BJ (cell line): ENCODE measurements at regions of chr6 and their contacts with region 1.

Region 1: DNA sequence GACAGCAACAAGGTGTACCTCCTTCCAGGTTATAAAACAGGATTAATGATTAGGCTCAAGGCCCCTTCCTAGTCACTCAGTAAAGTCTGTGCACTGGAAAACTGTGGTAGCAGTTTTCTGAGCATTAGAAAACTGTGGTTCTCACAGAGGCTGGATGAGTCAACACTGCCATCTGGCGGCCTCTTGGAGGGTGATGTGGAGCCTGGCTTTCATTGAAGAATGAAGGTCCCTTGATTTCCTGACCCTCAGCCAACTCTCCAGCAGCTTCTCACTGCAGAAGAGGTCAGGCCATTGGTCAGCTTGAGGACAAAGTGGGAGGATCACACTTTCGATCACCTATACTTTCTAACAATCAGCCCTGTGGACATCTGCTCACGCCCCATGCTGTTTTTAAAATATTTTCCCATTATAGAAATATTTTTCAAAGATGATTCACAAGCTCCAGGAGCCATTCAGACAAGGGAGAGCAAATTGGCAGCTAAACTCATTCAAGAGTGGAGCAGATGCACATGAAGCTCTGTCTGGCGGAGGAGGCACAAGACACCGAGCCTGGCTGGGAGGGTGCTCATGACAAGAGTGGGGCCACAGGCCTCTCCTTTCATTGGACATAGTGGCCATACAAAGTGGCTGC is 23.2 kb downstream of the PSMB1 start:
- DNase-seq: peak; percentile 5
- H3K4me3 ChIP-seq: no peak overlapping the region
- H3K27me3 ChIP-seq: no peaks in the 10 kb centered on the region
- CTCF ChIP-seq: peak; percentile 97

Region 2: DNA sequence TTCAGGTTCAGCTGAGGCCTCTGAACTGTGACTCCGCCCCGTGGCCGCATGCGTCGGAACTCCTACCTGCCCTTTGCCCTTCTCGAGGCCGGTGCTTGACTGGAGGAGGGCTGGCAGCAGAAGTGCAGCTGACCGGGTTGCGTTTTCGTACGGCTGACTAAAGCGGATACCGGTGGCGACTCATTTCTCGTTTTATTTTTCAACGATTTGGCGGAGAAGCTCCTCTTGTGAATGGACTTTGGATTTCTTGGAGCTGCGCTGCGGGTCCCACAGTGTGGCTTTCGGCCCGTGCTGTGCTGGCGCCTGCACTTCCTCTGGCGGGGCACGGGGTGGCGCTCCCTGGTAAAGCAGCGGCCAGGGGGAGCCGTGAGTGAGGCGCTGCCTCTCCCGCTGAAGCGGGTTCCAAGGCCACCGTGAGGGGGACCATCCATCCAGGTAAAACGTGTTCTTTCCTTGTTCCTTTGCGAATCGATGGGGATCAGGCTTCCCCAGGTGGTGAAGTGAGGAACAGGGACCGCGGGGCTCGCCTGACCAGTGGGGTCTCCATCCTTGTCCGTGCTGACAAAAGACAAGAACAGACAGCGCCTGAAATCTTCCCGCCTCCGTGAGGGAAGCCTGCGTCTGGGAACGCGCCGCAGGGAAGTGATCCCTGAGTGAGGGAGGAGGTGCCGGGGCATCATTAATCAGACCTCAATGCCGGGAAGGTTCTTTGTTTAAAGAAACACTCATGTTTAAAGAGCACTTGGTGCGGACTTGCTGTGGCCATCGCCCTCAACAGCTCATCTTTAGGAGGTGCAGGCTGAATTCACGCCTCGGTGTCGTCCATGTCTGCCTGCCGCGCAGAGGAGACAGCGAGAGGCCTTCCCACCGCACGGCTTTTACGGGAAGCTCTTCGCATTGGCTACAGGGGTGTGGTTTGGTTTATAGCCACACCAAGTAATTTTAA is 739.7 kb before region 1 on chr6:
- CTCF ChIA-PET with region 1: interaction called, 52 read pairs
- POLR2A ChIA-PET with region 1: no interaction called
- DNase-seq: peak; percentile 21
- H3K4me3 ChIP-seq: peak overlapping the region; percentile 45
- H3K27me3 ChIP-seq: peaks cover 1% of the 10 kb centered on the region; the same call in 1 of the 2 replicates
- CTCF ChIP-seq: peak; percentile 99

Region 3: DNA sequence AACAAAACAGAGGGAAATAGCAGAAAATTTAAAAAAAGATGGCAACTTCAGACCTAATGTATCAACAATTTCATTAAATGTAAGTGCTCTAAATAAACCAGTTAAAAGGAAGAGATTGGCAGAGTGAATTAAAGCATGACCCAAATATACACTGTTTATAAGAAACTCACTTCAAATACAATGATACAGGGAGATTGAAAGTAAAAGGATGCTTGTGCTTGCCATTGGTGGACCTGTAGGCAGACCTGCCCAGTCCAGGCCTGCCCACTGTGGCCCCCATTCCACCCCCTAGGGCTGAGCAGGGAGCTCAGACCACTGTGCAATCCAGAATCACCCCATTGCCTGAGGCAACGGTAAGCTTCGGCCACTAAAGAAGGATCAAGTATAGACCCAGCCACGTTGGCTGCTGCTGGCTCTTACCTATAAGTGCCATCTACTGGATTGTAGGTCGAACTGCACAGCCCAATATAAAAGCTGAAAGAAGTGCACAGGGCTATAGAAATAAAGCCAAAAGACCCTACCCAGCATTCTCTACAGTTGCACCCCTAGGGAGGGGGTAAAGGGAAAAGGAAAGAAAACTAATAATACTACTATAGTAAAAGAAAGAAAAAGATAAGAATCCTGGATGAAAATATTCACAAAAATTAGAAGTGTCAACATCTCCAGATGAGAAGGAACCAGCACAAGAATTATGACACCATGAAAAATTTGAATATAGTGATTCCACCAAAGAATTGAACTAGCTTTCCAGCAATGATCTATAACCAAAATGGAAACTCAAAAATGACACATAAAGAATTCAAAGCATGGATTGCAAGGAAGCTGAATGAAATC is 13.0 kb before region 1 on chr6:
- CTCF ChIA-PET with region 1: interaction called, 15 read pairs
- POLR2A ChIA-PET with region 1: no interaction called
- DNase-seq: no peak
- H3K4me3 ChIP-seq: no peak overlapping the region
- H3K27me3 ChIP-seq: no peaks in the 10 kb centered on the region
- CTCF ChIP-seq: peak; percentile 86

Region 4: DNA sequence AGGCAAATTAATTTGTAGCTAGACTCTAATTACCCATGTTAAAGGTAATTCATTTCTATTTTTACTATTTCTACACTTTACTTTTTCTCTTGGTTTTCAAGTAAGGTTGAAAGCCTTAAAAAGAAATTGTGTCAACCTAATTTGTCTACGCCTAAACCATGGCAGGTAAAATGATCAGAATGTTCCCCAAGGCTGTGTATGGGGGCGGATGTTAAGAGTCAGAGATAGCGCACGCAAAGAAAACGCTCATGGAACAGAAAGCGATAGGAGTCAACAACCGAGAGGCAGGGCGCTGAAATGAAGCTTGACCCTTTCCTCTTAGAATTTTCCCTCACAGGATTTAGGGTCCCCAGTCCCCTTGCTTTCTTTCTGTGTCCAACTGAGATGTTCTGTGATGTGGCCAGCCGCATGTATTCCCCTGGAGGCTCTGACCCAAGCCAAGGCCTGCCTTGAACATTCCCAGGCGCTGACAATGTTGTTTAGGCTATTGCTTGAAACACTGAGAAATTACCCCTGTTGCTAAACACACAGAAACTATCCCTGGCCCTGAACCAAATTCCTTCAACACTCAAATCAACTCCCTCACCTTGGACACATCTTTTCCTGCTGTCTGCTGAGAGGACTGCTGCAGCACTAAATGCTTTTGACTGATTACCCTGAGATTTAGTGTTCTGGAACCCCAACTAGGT is 12.2 kb after region 1 on chr6:
- CTCF ChIA-PET with region 1: interaction called, 24 read pairs
- POLR2A ChIA-PET with region 1: no interaction called
- DNase-seq: no peak
- H3K4me3 ChIP-seq: no peak overlapping the region
- H3K27me3 ChIP-seq: no peaks in the 10 kb centered on the region
- CTCF ChIP-seq: no peak